ENCODE measurements at regions of chr2 and their contacts with region 1.

Region 1: DNA sequence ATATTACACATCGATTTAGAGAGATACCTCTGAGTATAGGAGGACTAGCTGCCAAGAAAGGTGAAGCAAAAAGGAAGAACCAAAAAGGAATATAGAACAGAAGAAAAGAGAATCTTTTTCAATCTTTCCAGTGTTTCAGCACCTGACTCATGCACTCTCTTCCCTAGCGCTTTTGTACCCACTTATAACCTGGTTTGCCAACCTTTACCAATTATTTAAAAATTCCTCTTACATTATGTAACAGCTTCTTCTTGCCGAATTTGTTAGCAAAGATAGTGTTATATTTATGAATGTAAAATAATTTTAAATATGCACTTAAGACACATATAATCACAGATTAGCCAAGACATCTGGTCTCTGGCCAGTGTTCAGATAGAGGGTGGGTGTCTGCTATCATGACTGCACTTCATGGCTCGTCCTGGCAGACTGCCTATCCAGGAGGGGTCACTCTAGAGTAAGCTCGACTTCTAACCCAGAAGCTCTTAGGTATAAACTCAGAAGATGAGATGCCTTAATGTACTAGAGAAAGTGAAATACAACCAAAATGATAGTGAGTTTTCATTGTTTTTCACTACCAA is 122.9 kb downstream of the ATAD2B start:
- DNase-seq: peak; percentile 34
- H3K4me3 ChIP-seq: no peak overlapping the region
- H3K27ac ChIP-seq: peak overlapping the region in 1 of 2 experiments; percentile 8; a peak in 1 of 4 replicates
- H3K4me1 ChIP-seq: peaks cover 2 to 16% of the 10 kb centered on the region in 2 experiments; a peak in 3 of 4 replicates
- H3K27me3 ChIP-seq: no peaks in the 10 kb centered on the region
- CTCF ChIP-seq: peak; percentile 55
- EP300 ChIP-seq: no peak
- RAD21 ChIP-seq: peak; percentile 34

Region 2: GRCh38 chr2:23286758-23287704 is 517.0 kb before region 1 on chr2:
- CTCF ChIA-PET with region 1: no interaction called
- POLR2A ChIA-PET with region 1: no interaction called
- DNase-seq: no peak
- H3K4me3 ChIP-seq: peak overlapping the region in 1 of 2 experiments; percentile 34; a peak in 2 of 4 replicates
- H3K27ac ChIP-seq: peak overlapping the region; percentile 69 to 75
- H3K4me1 ChIP-seq: peaks cover 4 to 19% of the 10 kb centered on the region in 2 experiments
- H3K27me3 ChIP-seq: no peaks in the 10 kb centered on the region
- CTCF ChIP-seq: no peak
- EP300 ChIP-seq: peak in 1 of 2 experiments; percentile 53; a peak in 1 of 4 replicates
- RAD21 ChIP-seq: no peak

Region 3: GRCh38 chr2:23791030-23791429 is 13.0 kb before region 1 on chr2:
- CTCF ChIA-PET with region 1: interaction called, 10 read pairs
- POLR2A ChIA-PET with region 1: no interaction called
- DNase-seq: no peak
- H3K4me3 ChIP-seq: no peak overlapping the region
- H3K27ac ChIP-seq: peak overlapping the region in 1 of 2 experiments; percentile 63; a peak in 2 of 4 replicates
- H3K4me1 ChIP-seq: peaks cover 0 to 4% of the 10 kb centered on the region in 2 experiments; a peak in 1 of 4 replicates
- H3K27me3 ChIP-seq: no peaks in the 10 kb centered on the region
- CTCF ChIP-seq: no peak
- EP300 ChIP-seq: no peak
- RAD21 ChIP-seq: no peak

Measured in SK-N-SH (cell line).